T-cell (primary cell): ENCODE measurements at regions of chr5 and their contacts with region 1.

Region 1: GRCh38 chr5:79831381-79832309 is 142.0 kb downstream of the CMYA5 start:
- DNase-seq: no peak
- ATAC-seq: no peak
- H3K4me3 ChIP-seq: no peak overlapping the region
- H3K4me3 Mint-ChIP-seq: no peak overlapping the region
- H3K27ac ChIP-seq: no peak overlapping the region
- H3K27ac Mint-ChIP-seq: no peak overlapping the region
- H3K4me1 ChIP-seq: no peaks in the 10 kb centered on the region
- H3K4me1 Mint-ChIP-seq: peaks cover 0 to 13% (median 0%) of the 10 kb centered on the region in 3 donors
- H3K27me3 ChIP-seq: peaks cover 0 to 10% of the 10 kb centered on the region in 2 experiments
- H3K27me3 Mint-ChIP-seq: peaks cover 7 to 15% of the 10 kb centered on the region in 2 donors

Region 2: GRCh38 chr5:80054682-80055081 is 223.0 kb after region 1 on chr5:
- CTCF ChIA-PET with region 1: no interaction called
- POLR2A ChIA-PET with region 1: interaction called in 1 of 2 experiments, 14 read pairs
- DNase-seq: no peak
- ATAC-seq: no peak
- H3K4me3 ChIP-seq: no peak overlapping the region
- H3K4me3 Mint-ChIP-seq: no peak overlapping the region
- H3K27ac ChIP-seq: no peak overlapping the region
- H3K27ac Mint-ChIP-seq: no peak overlapping the region
- H3K4me1 ChIP-seq: no peaks in the 10 kb centered on the region
- H3K4me1 Mint-ChIP-seq: no peaks in the 10 kb centered on the region
- H3K27me3 ChIP-seq: peaks cover 0 to 8% of the 10 kb centered on the region in 2 experiments
- H3K27me3 Mint-ChIP-seq: peaks cover 0 to under 1% of the 10 kb centered on the region in 2 donors